Prostate gland (tissue), 2 donors: ENCODE measurements at regions of chr7 and their contacts with region 1.

Region 1: GRCh38 chr7:132102942-132103341 is 473.3 kb downstream of the PLXNA4 start:
- DNase-seq: no peak
- H3K4me3 ChIP-seq: no peak overlapping the region
- H3K27ac ChIP-seq: no peak overlapping the region
- H3K4me1 ChIP-seq: no peaks in the 10 kb centered on the region
- H3K27me3 ChIP-seq: no peaks in the 10 kb centered on the region
- CTCF ChIP-seq: no peak
- POLR2A ChIP-seq: no peak

Region 2: DNA sequence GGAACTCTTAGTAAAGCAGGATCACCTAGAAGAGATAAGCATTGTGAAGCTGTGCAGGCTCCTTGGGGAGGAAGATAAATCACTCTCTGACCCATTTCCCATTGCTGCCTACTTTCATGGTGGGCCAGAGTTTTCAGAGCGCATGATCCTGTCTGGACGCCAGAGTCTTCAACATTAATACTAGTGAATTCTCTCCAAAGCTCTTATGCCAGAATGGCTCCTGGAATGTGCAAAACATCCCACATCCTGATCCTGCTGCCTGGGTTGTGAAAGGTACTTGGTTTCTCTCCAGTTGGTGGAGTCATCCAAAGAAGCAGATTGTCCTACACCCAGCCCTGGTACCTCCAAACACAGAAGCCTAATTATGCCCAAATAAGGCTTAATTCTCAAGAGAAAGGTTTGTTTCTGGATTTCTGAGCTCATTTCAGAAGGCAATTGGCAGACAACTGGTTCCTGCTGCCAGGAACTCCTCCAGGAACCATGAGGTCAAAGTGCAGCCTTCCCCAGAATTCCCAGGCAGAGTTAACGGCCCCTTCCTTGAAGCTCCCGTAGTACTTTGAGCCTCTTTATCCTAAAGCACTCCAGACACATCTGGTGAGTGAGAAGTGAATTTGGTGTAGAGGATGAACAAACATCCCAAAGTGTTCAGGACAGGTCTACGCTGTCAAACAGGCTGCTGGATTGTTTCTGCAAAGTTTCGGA is 21.8 kb before region 1 on chr7:
- intact Hi-C with region 1: loop called (anchors 1 kb)
- DNase-seq: no peak
- H3K4me3 ChIP-seq: no peak overlapping the region
- H3K27ac ChIP-seq: no peak overlapping the region
- H3K4me1 ChIP-seq: no peaks in the 10 kb centered on the region
- H3K27me3 ChIP-seq: no peaks in the 10 kb centered on the region
- CTCF ChIP-seq: no peak
- POLR2A ChIP-seq: no peak

Region 3: DNA sequence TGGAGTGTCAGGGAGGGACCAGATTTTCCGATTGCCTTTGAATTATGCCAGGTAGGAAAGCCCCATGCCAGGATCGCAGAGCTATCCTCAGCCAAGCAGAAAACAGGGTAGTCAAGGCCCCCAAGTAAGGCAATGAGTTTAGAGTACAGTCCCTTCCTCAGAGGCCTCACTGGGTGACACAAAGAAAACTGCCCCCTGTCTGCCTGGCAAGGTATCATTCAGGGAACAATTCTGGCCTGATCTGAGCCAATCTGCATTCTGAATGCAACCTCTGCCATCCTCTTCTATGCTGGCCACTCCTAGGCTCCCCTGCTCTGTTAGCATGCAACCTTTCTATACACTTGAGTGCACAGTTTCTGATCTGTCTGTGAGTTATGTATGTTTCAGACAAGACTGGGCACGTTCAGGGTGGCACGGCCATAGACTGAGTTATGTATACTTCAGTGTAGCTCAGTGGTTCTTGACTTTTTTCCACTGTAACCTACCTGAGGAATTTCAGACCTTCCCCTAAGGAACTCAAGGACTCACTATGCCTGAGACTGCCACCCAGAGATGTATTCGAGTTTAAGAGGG is 136.6 kb after region 1 on chr7:
- intact Hi-C with region 1: no loop called
- DNase-seq: no peak
- H3K4me3 ChIP-seq: no peak overlapping the region
- H3K27ac ChIP-seq: no peak overlapping the region
- H3K4me1 ChIP-seq: no peaks in the 10 kb centered on the region
- H3K27me3 ChIP-seq: no peaks in the 10 kb centered on the region
- CTCF ChIP-seq: no peak
- POLR2A ChIP-seq: no peak

Region 4: DNA sequence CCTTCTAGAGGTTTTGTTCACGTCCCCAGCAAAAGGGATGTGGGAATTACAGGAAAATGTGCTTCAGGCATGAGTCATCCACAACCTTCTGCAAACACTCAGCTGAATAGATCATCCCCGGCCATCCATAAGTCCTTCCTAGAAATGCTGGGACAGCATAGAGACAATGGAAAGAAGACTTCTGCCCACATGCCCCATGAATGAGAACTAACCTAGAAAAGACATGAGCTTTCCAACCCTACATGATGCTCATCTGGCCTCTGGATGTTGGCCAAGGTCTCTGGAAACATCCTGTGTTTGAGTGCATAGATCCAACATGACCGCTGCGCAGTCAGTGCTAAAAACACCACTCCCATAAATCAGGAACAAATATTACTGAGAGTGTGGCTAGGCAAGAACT is 195.8 kb after region 1 on chr7:
- intact Hi-C with region 1: no loop called
- DNase-seq: no peak
- H3K4me3 ChIP-seq: no peak overlapping the region
- H3K27ac ChIP-seq: no peak overlapping the region
- H3K4me1 ChIP-seq: no peaks in the 10 kb centered on the region
- H3K27me3 ChIP-seq: no peaks in the 10 kb centered on the region
- CTCF ChIP-seq: no peak
- POLR2A ChIP-seq: no peak